Heart left ventricle (tissue), 16 donors: ENCODE measurements at regions of chr18 and their contacts with region 1.

Region 1: DNA sequence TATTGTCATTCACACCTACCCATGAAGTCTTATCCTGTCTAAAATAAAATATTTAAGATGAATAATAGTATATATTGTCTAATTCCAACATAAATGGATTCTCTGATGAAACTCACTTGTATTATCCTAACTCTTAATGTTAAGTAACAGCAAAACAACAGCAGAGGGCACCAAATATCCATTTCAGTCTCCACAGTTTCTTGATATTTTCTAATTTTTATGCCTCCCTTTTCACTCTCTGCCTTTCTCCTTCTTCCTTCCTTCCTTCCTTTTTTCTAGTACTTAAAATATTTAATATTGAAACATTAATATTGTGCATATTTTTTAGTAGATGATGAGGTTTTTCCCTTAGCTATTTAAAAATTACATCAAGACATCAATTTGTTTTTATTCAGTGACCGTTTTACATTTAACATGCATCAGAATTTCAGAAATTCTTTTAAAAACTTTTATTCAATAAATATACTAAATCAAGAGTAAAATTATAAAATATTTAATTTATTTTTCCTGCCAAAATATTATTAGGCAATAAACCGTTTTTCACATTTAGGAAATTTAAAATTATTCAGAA is 97.6 kb downstream of the WDR7 start:
- DNase-seq: no peak
- ATAC-seq: no peak
- H3K4me3 ChIP-seq: no peak overlapping the region
- H3K27ac ChIP-seq: no peak overlapping the region
- H3K4me1 ChIP-seq: peaks cover 0 to 28% (median 5%) of the 10 kb centered on the region in 12 donors
- H3K27me3 ChIP-seq: no peaks in the 10 kb centered on the region
- CTCF ChIP-seq: peak; percentile 43 to 78 (median 68)
- POLR2A ChIP-seq: no peak

Region 2: GRCh38 chr18:56638271-56639093 is 110.3 kb before region 1 on chr18 and contains the start of gene TXNL1:
- intact Hi-C with region 1: no loop called
- DNase-seq: peak; percentile 100
- ATAC-seq: peak; percentile 99
- H3K4me3 ChIP-seq: peak within 1 kb of the TSS; percentile 70 to 98 (median 87)
- H3K27ac ChIP-seq: peak within 1 kb of the TSS; percentile 89 to 99 (median 96)
- H3K4me1 ChIP-seq: peaks cover 0 to 45% (median 29%) of the 10 kb centered on the region in 12 donors
- H3K27me3 ChIP-seq: no peaks in the 10 kb centered on the region
- CTCF ChIP-seq: no peak
- POLR2A ChIP-seq: peak in 1 of 2 donors; percentile 61
- total RNA-seq, gene TXNL1: 68.0 to 100 (median 86.9) TPM

Region 3: DNA sequence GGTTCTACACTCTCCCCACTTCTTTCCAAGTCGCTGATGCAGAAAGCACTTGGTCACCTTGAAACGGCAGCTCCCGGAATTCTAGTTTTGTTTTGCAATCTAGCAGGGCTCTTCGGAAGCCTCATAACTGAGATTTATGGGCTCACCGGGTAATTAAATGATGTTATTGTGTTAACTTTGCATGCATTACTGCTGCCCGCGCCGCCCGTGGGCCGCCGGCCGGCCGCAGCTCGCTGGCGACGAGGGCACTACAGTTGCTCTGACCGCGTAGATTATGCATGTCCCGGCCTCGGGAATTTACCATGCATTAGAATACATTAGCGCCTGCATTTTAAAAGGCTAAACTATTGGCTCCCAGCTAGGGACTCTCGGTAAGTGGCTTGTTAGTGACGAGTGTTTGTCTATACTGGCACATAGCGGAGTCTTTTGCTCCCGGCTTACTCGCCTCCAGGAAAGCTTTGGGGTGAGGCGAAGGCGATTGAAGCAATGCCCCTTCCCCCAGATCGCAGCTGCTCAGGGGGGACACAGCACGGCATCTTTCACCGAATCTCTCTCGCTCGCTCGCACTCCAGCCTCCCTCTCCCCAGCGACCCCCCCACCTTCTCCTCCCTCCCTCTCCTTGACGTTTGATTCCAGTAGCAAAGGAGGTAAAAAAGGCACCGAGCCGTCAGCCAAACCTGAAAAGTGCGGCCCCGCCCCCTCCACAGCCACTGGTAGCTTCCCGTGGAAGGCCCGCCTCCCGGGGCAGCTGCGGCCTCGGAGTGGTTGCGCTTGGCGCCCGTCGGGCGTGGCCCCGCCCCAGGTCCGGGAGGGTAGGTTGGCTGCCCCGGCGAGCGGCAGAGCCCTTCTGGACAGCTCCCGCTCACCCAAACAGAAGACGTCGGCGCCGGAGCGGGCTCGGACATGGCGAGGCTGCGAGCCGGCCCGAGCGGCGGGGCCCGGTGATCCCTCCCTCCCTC is 686.0 kb after region 1 on chr18 and contains the start of gene ONECUT2:
- intact Hi-C with region 1: loop called in 5 of 10 experiments (anchors 5 to 10 kb)
- DNase-seq: peak; percentile 89 to 95 (median 93)
- ATAC-seq: peak; percentile 97 to 100 (median 99)
- H3K4me3 ChIP-seq: peak within 1 kb of the TSS; percentile 22 to 67 (median 54)
- H3K27ac ChIP-seq: no peak within 1 kb of the TSS
- H3K4me1 ChIP-seq: peaks cover 2 to 63% (median 36%) of the 10 kb centered on the region in 12 donors
- H3K27me3 ChIP-seq: peaks cover 76 to 96% (median 91%) of the 10 kb centered on the region in 9 donors
- CTCF ChIP-seq: no peak
- POLR2A ChIP-seq: no peak
- total RNA-seq, gene ONECUT2: 0.02 to 0.08 (median 0.05) TPM in 5 of 9 donors, not detected in the others

Region 4: DNA sequence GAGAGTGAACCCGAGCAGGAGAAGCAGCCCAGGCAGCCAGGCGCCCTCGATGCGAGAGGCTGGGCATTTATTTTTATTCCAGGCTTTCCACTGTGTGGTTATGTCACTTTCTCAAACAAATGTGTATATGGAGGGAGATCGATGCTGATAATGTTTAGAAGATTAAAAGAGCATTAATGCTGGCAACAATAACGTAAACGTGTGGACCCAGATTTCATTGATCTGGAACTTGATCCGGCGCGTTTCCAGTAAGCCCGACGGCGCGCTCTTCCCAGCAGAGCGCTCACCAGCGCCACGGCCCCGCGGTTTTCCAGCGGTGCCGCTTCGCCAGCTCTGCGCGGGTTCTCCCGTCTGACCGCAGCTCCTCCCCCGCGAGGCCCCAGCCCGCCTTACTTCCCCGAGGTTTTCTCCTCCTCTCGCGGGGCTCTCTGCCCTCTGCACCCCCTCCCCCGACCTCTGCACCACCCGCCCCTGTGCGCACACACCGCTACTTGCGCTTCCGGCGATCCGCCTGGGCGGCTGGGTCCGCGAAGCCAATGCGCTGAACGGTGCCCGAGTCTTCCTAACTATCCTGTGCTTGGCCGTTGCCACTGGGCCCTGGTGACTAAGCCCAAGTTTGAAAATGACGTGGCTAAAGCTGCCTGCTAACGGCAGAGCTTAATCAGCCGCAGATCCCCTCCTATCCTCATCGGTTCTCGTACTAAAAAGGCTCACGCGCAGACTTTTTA is 692.4 kb after region 1 on chr18:
- intact Hi-C with region 1: loop called in 5 of 10 experiments (anchors 5 to 10 kb)
- DNase-seq: no peak
- ATAC-seq: no peak
- H3K4me3 ChIP-seq: peak overlapping the region in 1 of 12 donors; percentile 14
- H3K27ac ChIP-seq: no peak overlapping the region
- H3K4me1 ChIP-seq: peaks cover 2 to 56% (median 41%) of the 10 kb centered on the region in 12 donors
- H3K27me3 ChIP-seq: peaks cover 65 to 100% (median 87%) of the 10 kb centered on the region in 9 donors
- CTCF ChIP-seq: no peak
- POLR2A ChIP-seq: no peak